Endothelial cell of umbilical vein (primary cell): ENCODE measurements at regions of chr10 and their contacts with region 1.

Region 1: DNA sequence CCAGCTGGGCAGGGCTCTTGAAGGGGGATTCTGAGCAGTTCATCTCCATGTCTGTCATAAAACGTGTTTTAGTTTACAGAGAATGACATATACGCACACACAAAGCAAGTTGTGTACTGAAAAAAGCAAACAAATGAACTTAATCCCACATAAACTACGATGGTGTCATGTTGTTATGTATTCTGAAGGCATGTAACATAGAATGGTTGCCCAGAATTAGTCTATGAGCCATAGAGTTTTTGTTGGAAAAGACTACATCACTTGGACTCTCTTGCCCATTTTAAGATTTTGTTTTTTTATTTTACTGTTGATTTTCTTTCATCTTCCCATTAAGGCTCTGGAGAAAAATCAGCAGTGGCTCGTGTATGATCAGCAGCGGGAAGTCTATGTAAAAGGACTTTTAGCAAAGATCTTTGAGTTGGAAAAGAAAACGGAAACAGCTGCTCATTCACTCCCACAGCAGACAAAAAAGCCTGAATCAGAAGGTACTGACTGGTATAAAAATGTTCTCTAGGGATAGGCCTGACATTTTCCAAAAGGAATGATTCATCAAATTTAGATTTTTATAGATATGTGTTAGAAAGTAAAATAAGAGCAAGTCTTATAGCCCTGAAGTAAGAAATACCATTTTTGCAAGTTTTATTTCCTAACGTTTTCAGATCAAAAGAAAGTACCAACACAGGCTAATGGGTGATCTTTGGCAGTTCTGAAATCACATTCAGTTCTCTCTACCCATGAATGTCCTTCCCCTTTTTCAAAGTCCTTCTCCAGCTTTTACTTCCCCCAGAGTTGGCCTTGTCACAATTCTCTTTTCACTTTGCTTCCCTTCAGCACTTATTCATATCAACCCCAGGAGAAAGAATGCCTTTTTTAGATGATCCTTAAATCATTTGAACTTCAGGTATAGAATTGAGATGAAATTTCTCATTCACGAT is 18.9 kb downstream of the CEP55 start:
- DNase-seq: peak; percentile 66
- H3K4me3 ChIP-seq: no peak overlapping the region
- H3K27ac ChIP-seq: no peak overlapping the region
- H3K4me1 ChIP-seq: peaks cover 4% of the 10 kb centered on the region
- H3K27me3 ChIP-seq: no peaks in the 10 kb centered on the region
- CTCF ChIP-seq: no peak
- POLR2A ChIP-seq: no peak

Region 2: DNA sequence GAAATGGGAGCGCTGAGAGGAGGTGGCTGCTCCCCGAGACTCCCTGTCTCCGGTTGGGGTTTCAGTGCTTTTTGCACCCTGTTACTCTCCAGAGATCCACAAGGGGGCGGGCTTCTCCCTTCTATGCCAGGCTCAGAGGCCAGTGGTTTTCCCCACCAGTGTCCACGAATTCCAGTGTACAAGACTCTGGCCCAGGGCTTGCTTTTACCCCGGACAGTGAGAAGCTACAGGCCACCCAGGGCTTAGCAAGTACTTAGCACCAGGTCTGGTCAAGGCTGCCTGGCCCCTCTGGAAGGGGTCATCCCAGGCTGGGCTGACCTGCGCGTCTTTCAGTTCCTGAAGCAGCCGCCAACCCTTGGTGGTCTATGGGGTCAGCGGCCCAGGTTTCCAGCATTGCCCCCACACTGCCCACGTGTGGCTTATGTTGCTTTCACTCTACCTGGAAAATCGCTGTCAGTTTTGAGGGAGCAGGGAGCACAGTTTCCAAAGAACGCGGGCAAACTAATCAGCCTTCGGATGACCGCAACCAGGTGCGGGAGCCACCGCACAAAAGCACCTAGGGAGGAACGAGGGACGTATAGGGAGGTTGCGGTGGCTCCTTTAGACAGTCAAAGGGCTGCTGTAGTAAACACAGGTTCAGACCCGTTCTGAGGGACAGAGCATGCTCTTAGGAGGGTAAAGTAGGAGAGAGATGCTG is 434.8 kb before region 1 on chr10:
- CTCF ChIA-PET with region 1: interaction called, 67 read pairs
- POLR2A ChIA-PET with region 1: no interaction called
- dilution Hi-C with region 1: no loop called
- intact Hi-C with region 1: loop called (anchors 1 kb)
- DNase-seq: no peak
- H3K4me3 ChIP-seq: no peak overlapping the region
- H3K27ac ChIP-seq: no peak overlapping the region
- H3K4me1 ChIP-seq: no peaks in the 10 kb centered on the region
- H3K27me3 ChIP-seq: peaks cover 8 to 11% of the 10 kb centered on the region in 2 experiments
- CTCF ChIP-seq: peak; percentile 75 to 85
- POLR2A ChIP-seq: no peak

Region 3: DNA sequence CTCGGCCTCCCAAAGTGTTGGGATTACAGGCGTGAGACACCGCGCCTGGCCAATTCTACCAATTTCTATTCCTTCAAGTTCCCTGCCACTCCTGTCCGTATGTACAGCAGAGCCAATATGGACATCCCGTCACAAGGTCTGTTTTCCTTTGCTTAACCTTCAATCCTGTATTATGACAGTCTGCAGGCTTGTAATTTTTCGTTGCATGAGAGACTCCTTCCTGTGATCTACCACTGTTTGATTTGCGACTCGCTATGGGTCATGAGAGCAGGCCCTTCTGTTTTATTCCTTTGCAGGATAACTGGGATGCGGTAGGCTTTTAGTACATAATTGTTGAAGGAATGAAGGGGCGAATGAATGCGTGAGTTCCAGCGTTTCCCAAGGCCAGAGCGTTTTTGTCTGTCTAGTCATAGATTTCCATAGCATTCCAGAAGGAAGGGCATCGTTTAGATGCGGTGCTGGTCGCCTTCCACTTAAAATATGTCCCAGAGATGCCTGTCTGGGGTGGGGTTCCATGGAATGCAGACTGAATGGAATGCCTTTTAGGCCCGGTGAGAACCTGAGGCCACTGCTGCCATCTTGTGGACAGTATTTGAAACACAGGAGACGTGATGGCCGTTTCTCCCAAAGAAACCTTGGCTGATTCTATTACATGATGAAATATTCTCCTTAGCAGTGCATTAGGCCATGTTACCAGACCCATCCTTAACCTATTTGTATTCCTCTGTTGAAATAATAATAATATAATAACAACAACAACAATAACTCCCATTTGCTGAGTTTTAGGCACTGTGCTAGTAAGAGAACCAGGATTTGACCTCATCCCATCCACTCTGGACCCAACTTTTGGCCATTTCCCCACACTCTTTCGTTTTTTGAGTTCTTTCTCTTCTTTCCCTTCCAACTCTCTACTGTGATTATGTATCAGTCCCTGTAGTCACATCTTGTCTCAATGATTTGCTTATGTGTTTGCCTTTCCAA is 226.4 kb before region 1 on chr10:
- CTCF ChIA-PET with region 1: interaction called, 5 read pairs
- POLR2A ChIA-PET with region 1: no interaction called
- dilution Hi-C with region 1: no loop called
- intact Hi-C with region 1: loop called (anchors 1 kb)
- DNase-seq: peak; percentile 71
- H3K4me3 ChIP-seq: no peak overlapping the region
- H3K27ac ChIP-seq: peak overlapping the region; percentile 8
- H3K4me1 ChIP-seq: peaks cover 2% of the 10 kb centered on the region
- H3K27me3 ChIP-seq: no peaks in the 10 kb centered on the region
- CTCF ChIP-seq: peak; percentile 77 to 83
- POLR2A ChIP-seq: no peak

Region 4: DNA sequence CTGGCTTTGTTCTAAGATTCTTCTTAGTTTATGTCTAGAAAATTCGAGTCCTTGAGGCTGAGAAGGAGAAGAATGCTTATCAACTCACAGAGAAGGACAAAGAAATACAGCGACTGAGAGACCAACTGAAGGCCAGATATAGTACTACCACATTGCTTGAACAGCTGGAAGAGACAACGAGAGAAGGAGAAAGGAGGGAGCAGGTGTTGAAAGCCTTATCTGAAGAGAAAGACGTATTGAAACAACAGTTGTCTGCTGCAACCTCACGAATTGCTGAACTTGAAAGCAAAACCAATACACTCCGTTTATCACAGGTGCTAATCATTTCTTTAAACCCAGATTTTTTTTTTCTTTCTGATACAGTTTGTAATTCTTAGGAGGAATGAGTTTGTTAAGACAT is 12.3 kb before region 1 on chr10:
- CTCF ChIA-PET with region 1: interaction called, 18 read pairs
- POLR2A ChIA-PET with region 1: no interaction called
- dilution Hi-C with region 1: no loop called
- intact Hi-C with region 1: no loop called
- DNase-seq: no peak
- H3K4me3 ChIP-seq: no peak overlapping the region
- H3K27ac ChIP-seq: no peak overlapping the region
- H3K4me1 ChIP-seq: peaks cover 9% of the 10 kb centered on the region
- H3K27me3 ChIP-seq: no peaks in the 10 kb centered on the region
- CTCF ChIP-seq: no peak
- POLR2A ChIP-seq: no peak